HepG2 (cell line): ENCODE measurements at regions of chr2 and their contacts with region 1.

Region 1: GRCh38 chr2:96260404-96261260 is 5.2 kb downstream of the TMEM127 start:
- DNase-seq: peak; percentile 100
- ATAC-seq: peak; percentile 90
- H3K4me3 ChIP-seq: peak overlapping the region; percentile 19 to 68 (median 31)
- H3K27ac ChIP-seq: peak overlapping the region; percentile 92
- H3K4me1 ChIP-seq: peaks cover 74% of the 10 kb centered on the region
- H3K27me3 ChIP-seq: no peaks in the 10 kb centered on the region
- CTCF ChIP-seq: peak; percentile 67
- EP300 ChIP-seq: peak; percentile 73 to 92
- POLR2A ChIP-seq: peak in 1 of 2 experiments; percentile 71; a peak in 2 of 4 replicates
- RAD21 ChIP-seq: peak; percentile 61

Region 2: GRCh38 chr2:96138179-96139145 is 122.2 kb before region 1 on chr2 and contains the start of gene ASTL:
- CTCF ChIA-PET with region 1: no interaction called
- POLR2A ChIA-PET with region 1: no interaction called
- in situ Hi-C with region 1: loop called (anchors 5 kb)
- intact Hi-C with region 1: loop called (anchors 2 kb)
- DNase-seq: peak; percentile 56
- ATAC-seq: peak; percentile 84
- H3K4me3 ChIP-seq: no peak within 1 kb of the TSS
- H3K27ac ChIP-seq: no peak within 1 kb of the TSS
- H3K4me1 ChIP-seq: no peaks in the 10 kb centered on the region
- H3K27me3 ChIP-seq: peaks cover 20 to 62% of the 10 kb centered on the region in 2 experiments
- CTCF ChIP-seq: peak; percentile 87
- EP300 ChIP-seq: no peak
- POLR2A ChIP-seq: no peak
- RAD21 ChIP-seq: peak; percentile 79
- total RNA-seq, gene ASTL: not detected in 2 replicates

Region 3: GRCh38 chr2:96145036-96145847 is 115.4 kb before region 1 on chr2 and contains the start of gene DUSP2:
- CTCF ChIA-PET with region 1: no interaction called
- POLR2A ChIA-PET with region 1: no interaction called
- in situ Hi-C with region 1: loop called (anchors 5 kb)
- intact Hi-C with region 1: no loop called
- DNase-seq: no peak
- ATAC-seq: no peak
- H3K4me3 ChIP-seq: peak within 1 kb of the TSS in 1 of 3 experiments; percentile 17; a peak in 1 of 6 replicates
- H3K27ac ChIP-seq: no peak within 1 kb of the TSS
- H3K4me1 ChIP-seq: peaks cover 15% of the 10 kb centered on the region
- H3K27me3 ChIP-seq: peaks cover 11 to 67% of the 10 kb centered on the region in 2 experiments; a peak in 4 of 5 replicates
- CTCF ChIP-seq: no peak
- EP300 ChIP-seq: no peak
- POLR2A ChIP-seq: no peak
- RAD21 ChIP-seq: no peak
- total RNA-seq, gene DUSP2: not detected in 2 replicates

Region 4: DNA sequence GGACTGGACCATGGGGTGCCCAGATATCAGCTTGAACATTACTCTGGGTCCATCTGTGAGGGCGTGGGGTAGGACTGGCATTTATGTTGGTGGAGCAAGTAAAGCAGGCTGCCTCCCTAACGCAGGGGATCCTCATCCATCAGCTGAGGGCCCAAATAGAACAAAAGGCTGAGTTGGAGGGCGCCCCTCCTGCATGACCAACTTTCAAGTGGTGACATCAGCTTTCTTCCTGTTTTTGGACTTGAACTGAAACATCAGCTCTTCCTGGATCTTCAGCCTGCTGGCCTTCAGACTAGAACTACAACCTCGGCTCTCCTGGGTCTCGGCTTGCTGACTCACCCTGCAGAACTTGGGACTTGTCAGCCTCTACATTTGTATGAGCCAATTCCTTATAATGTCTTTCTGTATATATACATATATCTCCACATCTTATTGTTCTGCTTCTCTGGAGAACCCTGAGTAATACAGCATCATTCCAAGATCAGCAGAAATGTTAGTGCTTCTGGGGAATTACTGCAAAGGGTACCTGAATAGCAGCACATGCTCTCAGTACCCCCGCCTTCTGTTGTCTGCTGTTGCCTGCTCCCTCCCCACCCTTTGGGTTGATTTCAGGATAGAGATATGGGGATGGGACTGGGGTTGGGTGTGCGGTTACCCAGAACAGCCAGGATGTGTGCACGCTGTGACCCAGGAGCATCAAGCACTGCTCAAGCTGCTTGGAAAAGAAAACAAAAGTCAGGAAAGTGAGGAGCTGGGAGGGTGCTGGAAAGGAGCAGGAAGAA is 14.8 kb before region 1 on chr2:
- CTCF ChIA-PET with region 1: no interaction called
- POLR2A ChIA-PET with region 1: interaction called, 63 read pairs
- in situ Hi-C with region 1: no loop called
- intact Hi-C with region 1: no loop called
- DNase-seq: no peak
- ATAC-seq: peak; percentile 8; the same call in 2 of the 3 replicates
- H3K4me3 ChIP-seq: no peak overlapping the region
- H3K27ac ChIP-seq: no peak overlapping the region
- H3K4me1 ChIP-seq: no peaks in the 10 kb centered on the region
- H3K27me3 ChIP-seq: no peaks in the 10 kb centered on the region
- CTCF ChIP-seq: no peak
- EP300 ChIP-seq: no peak
- POLR2A ChIP-seq: no peak
- RAD21 ChIP-seq: no peak

Region 5: GRCh38 chr2:96274355-96275056 is 13.9 kb after region 1 on chr2:
- CTCF ChIA-PET with region 1: no interaction called
- POLR2A ChIA-PET with region 1: interaction called, 15 read pairs
- in situ Hi-C with region 1: no loop called
- intact Hi-C with region 1: no loop called
- DNase-seq: no peak
- ATAC-seq: peak; percentile 25
- H3K4me3 ChIP-seq: no peak overlapping the region
- H3K27ac ChIP-seq: peak overlapping the region; percentile 34
- H3K4me1 ChIP-seq: peaks cover 22% of the 10 kb centered on the region
- H3K27me3 ChIP-seq: no peaks in the 10 kb centered on the region
- CTCF ChIP-seq: no peak
- EP300 ChIP-seq: no peak
- POLR2A ChIP-seq: peak in 1 of 2 experiments; percentile 44; a peak in 1 of 4 replicates
- RAD21 ChIP-seq: no peak

Region 6: DNA sequence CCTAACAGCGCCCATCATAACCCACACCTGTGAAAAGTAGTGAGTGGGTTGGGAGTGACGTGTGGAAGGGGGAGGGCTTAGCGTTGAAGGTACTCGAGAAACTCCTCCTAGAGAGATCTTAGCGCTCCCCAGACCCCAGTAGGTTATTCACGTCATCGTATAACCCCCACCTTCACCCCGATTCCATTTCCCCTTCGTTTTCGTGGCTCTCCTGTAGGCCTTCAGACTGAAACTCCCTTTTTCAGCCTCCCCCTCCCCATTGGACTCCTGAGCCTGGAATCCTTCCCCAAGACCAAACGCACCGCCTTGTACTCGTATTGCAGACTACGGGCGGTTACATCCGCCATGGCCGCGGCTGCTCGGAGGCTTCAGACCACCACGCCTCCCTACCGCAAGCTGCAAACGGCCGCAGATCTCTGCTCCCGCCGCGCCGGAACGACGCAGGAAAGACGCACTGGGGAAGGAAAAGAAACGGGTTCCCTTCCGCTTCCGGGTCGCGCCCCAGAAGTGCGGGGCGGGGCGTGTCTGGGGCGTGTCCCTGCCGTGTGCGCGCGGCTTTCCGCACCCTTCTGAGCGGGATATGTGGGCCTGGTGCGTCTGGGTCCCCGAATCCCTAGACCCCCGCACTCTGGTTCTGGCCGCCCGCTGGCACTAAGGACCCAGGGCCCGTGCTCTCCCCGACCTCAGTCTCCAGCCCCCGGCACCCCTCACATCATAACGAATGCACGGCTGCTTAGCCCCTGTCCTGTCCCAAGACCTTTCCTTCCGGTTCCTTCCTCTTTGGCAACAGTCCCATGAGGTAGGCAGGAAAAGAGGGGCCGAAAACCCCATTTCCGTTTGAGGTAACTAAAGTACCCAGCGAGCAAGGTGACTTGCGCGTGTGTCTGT is 44.7 kb after region 1 on chr2 and contains the start of gene SNRNP200:
- CTCF ChIA-PET with region 1: no interaction called
- POLR2A ChIA-PET with region 1: interaction called, 30 read pairs
- in situ Hi-C with region 1: no loop called
- intact Hi-C with region 1: no loop called
- DNase-seq: peak; percentile 86
- ATAC-seq: peak; percentile 98
- H3K4me3 ChIP-seq: peak within 1 kb of the TSS; percentile 79 to 92 (median 91)
- H3K27ac ChIP-seq: peak within 1 kb of the TSS; percentile 75
- H3K4me1 ChIP-seq: peaks cover 37% of the 10 kb centered on the region
- H3K27me3 ChIP-seq: no peaks in the 10 kb centered on the region; a peak in 1 of 5 replicates
- CTCF ChIP-seq: peak; percentile 31
- EP300 ChIP-seq: no peak
- POLR2A ChIP-seq: peak; percentile 88 to 95
- RAD21 ChIP-seq: peak; percentile 37; the same call in 1 of the 2 replicates
- total RNA-seq, gene SNRNP200: 99.0 and 163 TPM in 2 replicates

Region 7: DNA sequence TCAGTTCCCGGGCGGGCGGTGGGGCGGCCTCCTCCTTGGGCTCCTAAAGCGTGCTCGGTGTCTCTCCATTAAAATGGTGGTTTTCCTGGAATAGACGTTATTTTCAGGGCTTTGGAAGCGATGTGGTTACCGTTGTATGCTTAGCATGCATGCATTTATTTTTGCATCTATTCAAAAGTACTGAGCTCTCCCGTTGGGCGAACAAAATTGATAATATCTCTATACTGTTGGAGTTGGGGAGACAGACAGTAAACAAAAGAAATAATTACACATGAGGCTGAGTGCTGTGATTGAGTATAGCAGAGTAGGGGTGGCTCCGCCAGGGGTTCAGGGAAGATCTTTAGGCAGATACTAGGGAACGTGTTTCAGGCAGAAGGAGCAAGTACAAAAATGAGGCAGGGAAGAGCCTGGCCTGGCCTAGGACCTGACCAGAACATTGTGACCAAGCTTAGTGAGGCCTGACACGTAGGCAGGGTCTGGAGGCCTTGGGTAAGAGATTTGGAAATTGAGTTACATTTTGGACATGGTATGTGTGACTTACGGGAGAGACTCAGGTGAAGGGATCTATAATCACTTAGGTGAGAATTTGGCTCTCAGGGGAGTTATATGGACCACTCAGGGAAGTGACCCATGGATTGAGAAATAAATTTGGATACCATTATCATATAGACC is 75.6 kb after region 1 on chr2:
- CTCF ChIA-PET with region 1: no interaction called
- POLR2A ChIA-PET with region 1: interaction called, 16 read pairs
- in situ Hi-C with region 1: no loop called
- intact Hi-C with region 1: no loop called
- DNase-seq: no peak
- ATAC-seq: peak; percentile 28
- H3K4me3 ChIP-seq: peak overlapping the region; percentile 74 to 85 (median 81)
- H3K27ac ChIP-seq: peak overlapping the region; percentile 84
- H3K4me1 ChIP-seq: peaks cover 32% of the 10 kb centered on the region
- H3K27me3 ChIP-seq: no peaks in the 10 kb centered on the region; a peak in 1 of 5 replicates
- CTCF ChIP-seq: no peak
- EP300 ChIP-seq: no peak
- POLR2A ChIP-seq: peak; percentile 25 to 73
- RAD21 ChIP-seq: no peak